ENCODE measurements at regions of chr1 and their contacts with region 1.

Region 1: GRCh38 chr1:161117759-161118581 is at the starts of genes NIT1 and PFDN2:
- DNase-seq: peak; percentile 84
- ATAC-seq: peak; percentile 77
- H3K4me3 Mint-ChIP-seq: peak within 1 kb of the TSS; percentile 92
- H3K27ac Mint-ChIP-seq: peak within 1 kb of the TSS; percentile 89
- H3K4me1 Mint-ChIP-seq: peaks cover 87% of the 10 kb centered on the region
- H3K27me3 Mint-ChIP-seq: no peaks in the 10 kb centered on the region
- CTCF ChIP-seq: no peak
- total RNA-seq, gene NIT1: 40.5 and 43.9 TPM in 2 replicates
- total RNA-seq, gene PFDN2: 43.8 and 67.9 TPM in 2 replicates

Region 2: DNA sequence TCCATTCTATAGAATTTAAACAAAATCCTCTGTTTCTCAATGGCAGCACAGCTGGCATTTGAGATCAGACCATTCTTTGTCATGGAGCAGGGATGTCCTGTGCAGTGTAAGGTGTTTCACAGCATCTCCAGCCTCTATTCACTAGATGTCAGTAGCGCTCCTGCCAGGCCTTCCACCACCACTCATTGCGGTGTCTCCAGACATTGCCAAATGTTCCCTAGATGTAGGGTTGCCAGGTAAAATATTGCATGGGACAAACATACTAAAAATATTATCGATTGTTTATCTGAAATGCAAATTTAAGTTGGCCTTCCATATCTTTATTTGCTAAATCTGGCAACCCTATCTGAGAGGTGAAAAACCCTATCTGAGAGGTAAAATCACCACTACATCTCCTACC is 175.0 kb before region 1 on chr1:
- CTCF ChIA-PET with region 1: no interaction called
- POLR2A ChIA-PET with region 1: no interaction called
- intact Hi-C with region 1: no loop called
- DNase-seq: no peak
- ATAC-seq: no peak
- H3K4me3 Mint-ChIP-seq: no peak overlapping the region
- H3K27ac Mint-ChIP-seq: no peak overlapping the region
- H3K4me1 Mint-ChIP-seq: no peaks in the 10 kb centered on the region
- H3K27me3 Mint-ChIP-seq: peaks cover 5% of the 10 kb centered on the region
- CTCF ChIP-seq: no peak

Region 3: GRCh38 chr1:161153679-161154426 is 35.9 kb after region 1 on chr1 and contains the start of gene UFC1:
- CTCF ChIA-PET with region 1: no interaction called
- POLR2A ChIA-PET with region 1: interaction called, 13 read pairs
- intact Hi-C with region 1: loop called (anchors 2 kb)
- DNase-seq: peak; percentile 66
- ATAC-seq: peak; percentile 94
- H3K4me3 Mint-ChIP-seq: peak within 1 kb of the TSS; percentile 99
- H3K27ac Mint-ChIP-seq: peak within 1 kb of the TSS; percentile 100
- H3K4me1 Mint-ChIP-seq: peaks cover 21% of the 10 kb centered on the region
- H3K27me3 Mint-ChIP-seq: no peaks in the 10 kb centered on the region
- CTCF ChIP-seq: no peak
- total RNA-seq, gene UFC1: 107 and 127 TPM in 2 replicates

Region 4: DNA sequence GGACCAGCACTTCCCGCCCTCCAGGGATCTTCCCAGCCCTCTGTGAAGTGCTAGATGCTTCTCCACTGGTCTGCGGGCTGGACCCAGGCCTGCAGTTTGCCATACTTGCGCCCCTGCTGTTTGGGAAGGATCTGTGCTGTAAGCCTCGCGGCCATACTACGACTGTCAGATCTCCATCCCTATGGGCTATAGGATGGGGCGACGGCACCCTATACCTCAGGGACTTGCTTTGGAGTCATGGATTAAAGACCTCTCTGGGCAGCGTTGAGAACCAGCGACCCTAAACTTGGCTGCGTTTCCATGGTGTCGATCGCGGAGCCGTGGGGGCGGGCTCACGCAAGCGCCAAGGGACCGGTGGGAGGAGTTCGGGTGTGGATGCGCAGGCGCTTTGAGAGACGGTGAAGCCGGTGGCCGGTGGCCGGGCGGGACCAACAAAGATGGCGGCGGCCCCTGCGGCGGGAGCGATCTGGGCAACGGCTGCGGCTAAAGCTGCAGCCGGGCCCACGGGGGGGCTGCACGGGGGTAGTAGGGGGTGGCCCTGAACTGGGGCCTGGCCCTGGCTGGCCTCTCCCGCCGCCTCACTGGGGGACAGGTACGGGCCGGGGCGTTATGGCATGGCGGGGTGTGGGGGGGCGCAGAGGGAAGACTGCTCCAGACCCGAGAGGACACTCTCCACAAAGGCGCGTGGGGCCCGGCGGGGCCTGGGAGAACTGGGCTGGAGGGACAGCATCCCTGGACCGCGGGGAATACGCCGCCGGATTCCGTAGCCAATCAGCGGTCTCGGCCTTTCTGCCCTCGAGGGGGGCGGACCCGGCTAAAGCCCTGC is 41.3 kb after region 1 on chr1 and contains the start of gene USP21:
- CTCF ChIA-PET with region 1: no interaction called
- POLR2A ChIA-PET with region 1: interaction called, 3 read pairs
- intact Hi-C with region 1: loop called (anchors 2 kb)
- DNase-seq: peak; percentile 93
- ATAC-seq: peak; percentile 95
- H3K4me3 Mint-ChIP-seq: peak within 1 kb of the TSS; percentile 93
- H3K27ac Mint-ChIP-seq: peak within 1 kb of the TSS; percentile 91
- H3K4me1 Mint-ChIP-seq: peaks cover 48% of the 10 kb centered on the region
- H3K27me3 Mint-ChIP-seq: no peaks in the 10 kb centered on the region
- CTCF ChIP-seq: no peak
- total RNA-seq, gene USP21: 31.9 and 38.1 TPM in 2 replicates

Region 5: GRCh38 chr1:161314201-161314981 is 196.4 kb after region 1 on chr1 and contains the start of gene SDHC:
- CTCF ChIA-PET with region 1: no interaction called
- POLR2A ChIA-PET with region 1: interaction called, 10 read pairs
- intact Hi-C with region 1: no loop called
- DNase-seq: peak; percentile 83
- ATAC-seq: peak; percentile 97
- H3K4me3 Mint-ChIP-seq: peak within 1 kb of the TSS; percentile 98
- H3K27ac Mint-ChIP-seq: peak within 1 kb of the TSS; percentile 98
- H3K4me1 Mint-ChIP-seq: peaks cover 21% of the 10 kb centered on the region
- H3K27me3 Mint-ChIP-seq: no peaks in the 10 kb centered on the region
- CTCF ChIP-seq: no peak
- total RNA-seq, gene SDHC: 160 and 179 TPM in 2 replicates